ENCODE measurements at regions of chr6 and their contacts with region 1.

Region 1: DNA sequence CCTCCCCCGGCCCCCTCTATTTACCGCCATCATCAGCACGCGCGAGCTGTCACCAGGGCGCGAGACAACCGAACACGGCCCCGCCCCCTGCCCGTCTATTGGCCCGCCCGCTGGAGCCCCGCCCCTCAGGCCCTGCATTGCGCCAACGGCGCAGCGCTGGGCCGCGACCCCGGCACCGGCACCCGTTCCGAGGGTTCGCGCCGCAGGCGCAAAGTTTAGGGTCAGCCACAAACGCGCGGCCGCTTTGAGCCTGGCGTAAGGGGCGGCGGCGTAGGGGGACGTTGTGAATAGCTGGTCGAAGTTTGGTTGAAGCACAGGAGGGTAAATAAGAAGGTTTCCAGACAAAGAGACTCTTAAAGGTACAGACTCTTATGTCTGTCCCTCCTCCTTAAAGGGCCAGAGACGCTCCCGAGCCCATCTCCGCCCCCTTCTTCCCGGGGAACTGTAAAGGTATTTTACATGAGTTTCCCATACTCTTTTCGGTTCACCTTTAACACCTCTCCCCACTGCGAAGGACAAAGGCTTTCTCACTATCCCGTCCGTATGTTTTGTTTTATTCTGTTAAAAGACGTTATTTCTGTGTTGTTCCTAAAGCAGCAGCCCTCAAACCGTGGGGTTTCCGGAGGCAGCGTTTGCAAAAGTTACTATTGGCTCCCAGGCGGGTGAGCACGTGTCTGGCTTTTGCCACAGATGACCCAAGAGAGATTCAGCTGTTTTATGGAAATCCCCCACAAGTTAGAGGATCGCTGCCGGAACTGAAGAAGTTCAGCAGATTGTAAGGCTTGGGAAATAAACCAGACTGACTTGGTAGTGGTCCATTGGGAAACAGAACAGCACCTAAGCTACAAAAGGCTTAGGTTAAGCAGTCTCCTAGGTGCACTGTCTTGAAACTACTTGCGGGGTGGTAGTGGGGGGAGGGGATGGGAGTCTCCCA is at the start of gene USP49:
- DNase-seq: peak; percentile 40 to 94
- H3K4me3 ChIP-seq: peak within 1 kb of the TSS; percentile 69 to 87
- H3K27ac ChIP-seq: peak within 1 kb of the TSS; percentile 79 to 86
- H3K4me1 ChIP-seq: peaks cover 0 to 10% of the 10 kb centered on the region in 2 donors
- H3K27me3 ChIP-seq: no peaks in the 10 kb centered on the region
- CTCF ChIP-seq: no peak
- total RNA-seq, gene USP49: 8.7 TPM

Region 2: DNA sequence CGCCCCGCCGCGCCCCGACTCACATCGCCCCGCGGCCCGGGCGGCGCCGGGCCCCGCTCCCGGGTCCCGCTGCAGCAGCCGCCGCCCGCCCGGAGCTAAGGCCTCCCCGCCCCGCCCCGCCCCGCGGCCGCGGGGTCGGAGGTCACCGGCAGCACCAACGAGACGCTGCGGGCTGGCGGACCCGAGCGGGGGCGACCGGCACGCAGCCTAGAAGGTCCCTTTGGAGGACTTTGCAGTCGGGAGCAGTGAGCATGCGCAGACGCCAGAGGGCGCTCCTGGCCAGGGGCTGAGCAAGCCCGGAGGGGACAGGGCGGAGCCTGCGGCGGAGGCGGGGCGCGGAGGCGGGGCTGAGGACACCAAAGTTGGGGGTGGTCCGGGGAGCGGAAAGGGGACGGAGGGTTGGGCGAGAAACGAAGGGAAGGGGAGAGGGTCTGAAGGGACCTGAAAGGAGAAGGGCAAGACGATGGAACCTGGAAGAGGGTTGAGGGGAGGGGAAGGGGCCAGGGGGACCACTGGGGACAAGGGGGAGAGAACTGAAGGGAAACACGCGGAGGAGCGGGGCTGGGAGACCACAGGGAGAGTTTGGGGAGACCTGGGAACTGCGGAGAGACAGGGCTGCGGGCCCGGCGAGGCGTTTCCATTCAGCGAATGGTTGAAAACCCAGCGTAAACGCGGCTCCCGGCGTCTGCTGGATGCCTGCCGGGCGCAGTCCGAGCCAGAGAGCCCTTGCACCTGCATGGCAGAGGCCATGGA is 115.6 kb before region 1 on chr6 and contains the start of gene FRS3:
- intact Hi-C with region 1: loop called (anchors 2 kb)
- DNase-seq: peak; percentile 88 to 98
- H3K4me3 ChIP-seq: peak within 1 kb of the TSS; percentile 71 to 95
- H3K27ac ChIP-seq: peak within 1 kb of the TSS; percentile 72 to 88
- H3K4me1 ChIP-seq: peaks cover 6 to 14% of the 10 kb centered on the region in 2 donors
- H3K27me3 ChIP-seq: no peaks in the 10 kb centered on the region
- CTCF ChIP-seq: peak; percentile 92 to 97 (median 93)
- total RNA-seq, gene FRS3: 26.0 TPM

Region 3: GRCh38 chr6:41920921-41921711 is 25.5 kb after region 1 on chr6 and contains the starts of genes BYSL and MED20:
- intact Hi-C with region 1: loop called (anchors 1 kb)
- DNase-seq: peak; percentile 69 to 95
- H3K4me3 ChIP-seq: peak within 1 kb of the TSS; percentile 92 to 97
- H3K27ac ChIP-seq: peak within 1 kb of the TSS; percentile 98 to 99
- H3K4me1 ChIP-seq: peaks cover 8 to 19% of the 10 kb centered on the region in 2 donors
- H3K27me3 ChIP-seq: no peaks in the 10 kb centered on the region
- CTCF ChIP-seq: peak; percentile 94 to 97 (median 96)
- total RNA-seq, gene BYSL: 1.6 TPM
- total RNA-seq, gene MED20: 13.5 TPM

Region 4: DNA sequence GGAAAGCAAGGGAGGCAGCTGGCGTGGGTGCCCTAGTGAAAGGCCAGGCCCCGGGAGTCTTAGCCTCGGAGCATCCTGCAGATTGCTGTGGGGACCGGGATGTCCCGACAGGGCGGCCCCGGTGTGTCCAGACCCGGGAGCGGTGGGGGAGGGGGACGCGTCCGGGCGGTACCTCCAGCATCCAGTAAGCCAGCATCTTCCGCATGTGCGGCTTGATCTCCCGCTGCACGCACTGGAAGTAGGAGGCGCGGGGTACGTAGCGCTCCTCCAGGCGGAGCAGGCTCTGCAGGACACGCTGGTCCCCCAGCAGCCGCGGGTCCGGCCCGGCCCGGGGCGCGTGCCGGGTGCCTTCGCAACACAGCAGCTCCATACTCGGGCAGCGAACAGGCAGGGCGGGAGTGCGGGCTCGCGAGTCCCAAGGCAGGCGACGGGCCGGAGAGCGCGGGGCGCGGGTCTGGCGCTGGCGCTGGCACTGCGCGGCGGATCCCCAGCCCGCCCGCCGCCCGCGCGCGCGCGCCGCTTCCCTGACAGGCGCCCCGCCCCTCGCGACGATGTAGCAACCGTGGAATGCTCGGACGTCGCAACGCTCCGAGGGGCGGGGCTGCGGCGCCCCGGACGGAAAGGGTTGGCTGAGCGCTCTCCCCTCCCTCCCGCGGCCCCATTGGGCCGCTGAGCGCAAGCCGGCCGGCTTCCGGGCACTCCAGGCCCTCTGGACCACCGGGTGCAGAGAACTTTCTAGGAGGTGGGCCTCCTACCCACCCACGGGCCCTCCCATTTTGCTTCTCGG is 45.9 kb after region 1 on chr6 and contains the start of gene CCND3:
- intact Hi-C with region 1: loop called (anchors 1 kb)
- DNase-seq: peak; percentile 57 to 95
- H3K4me3 ChIP-seq: peak within 1 kb of the TSS; percentile 84 to 93
- H3K27ac ChIP-seq: peak within 1 kb of the TSS; percentile 72 to 83
- H3K4me1 ChIP-seq: peaks cover 4 to 20% of the 10 kb centered on the region in 2 donors
- H3K27me3 ChIP-seq: no peaks in the 10 kb centered on the region
- CTCF ChIP-seq: peak in 1 of 3 experiments; percentile 1
- total RNA-seq, gene CCND3: 130 TPM

Region 5: DNA sequence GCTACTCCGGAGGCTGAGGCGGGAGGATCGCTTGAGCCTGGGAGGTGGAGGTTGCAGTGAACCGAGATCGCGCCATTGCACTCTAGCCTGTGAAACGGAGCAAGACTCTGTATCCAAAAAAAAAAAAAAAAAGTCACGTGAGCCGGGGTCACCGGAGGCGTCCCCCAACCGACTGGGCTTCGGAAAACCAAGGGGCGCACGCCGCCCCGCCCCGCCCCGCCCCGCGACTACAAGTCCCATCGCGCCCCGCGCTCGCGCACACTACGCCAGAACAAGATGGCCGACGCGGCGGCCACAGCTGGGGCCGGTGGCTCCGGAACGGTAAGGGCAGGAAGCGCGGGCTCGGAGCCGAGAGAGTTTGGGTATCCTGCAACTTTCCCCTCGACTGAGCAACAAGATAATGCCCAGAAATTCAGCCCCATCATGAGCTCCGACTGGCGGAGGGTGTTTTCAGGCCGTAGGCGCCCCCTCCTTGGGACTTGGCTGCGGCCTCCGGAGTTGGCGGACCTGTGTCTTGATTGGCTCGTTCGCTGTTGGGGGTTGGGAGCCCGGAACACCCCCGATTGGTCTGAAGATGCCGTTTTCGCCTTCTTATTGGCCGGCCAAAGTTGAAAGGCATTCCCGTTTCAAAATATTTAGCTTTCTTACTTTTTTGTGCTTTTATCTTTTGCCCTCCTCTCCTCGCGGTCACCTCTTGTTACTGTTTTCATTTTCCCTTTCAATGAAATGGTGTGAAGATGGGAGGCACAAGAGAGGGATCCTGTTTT is 154.9 kb after region 1 on chr6 and contains the start of gene TAF8:
- intact Hi-C with region 1: loop called (anchors 2 kb)
- DNase-seq: peak; percentile 66 to 94
- H3K4me3 ChIP-seq: peak within 1 kb of the TSS; percentile 71 to 88
- H3K27ac ChIP-seq: peak within 1 kb of the TSS; percentile 83 to 95
- H3K4me1 ChIP-seq: peaks cover 15 to 26% of the 10 kb centered on the region in 2 donors
- H3K27me3 ChIP-seq: no peaks in the 10 kb centered on the region
- CTCF ChIP-seq: no peak
- total RNA-seq, gene TAF8: 26.0 TPM

Region 6: GRCh38 chr6:42756722-42757121 is 861.2 kb after region 1 on chr6:
- intact Hi-C with region 1: no loop called
- DNase-seq: no peak
- H3K4me3 ChIP-seq: no peak overlapping the region
- H3K27ac ChIP-seq: no peak overlapping the region
- H3K4me1 ChIP-seq: no peaks in the 10 kb centered on the region
- H3K27me3 ChIP-seq: no peaks in the 10 kb centered on the region
- CTCF ChIP-seq: no peak